Motor neuron (in vitro differentiated cells): ENCODE measurements at regions of chr1 and their contacts with region 1.

Region 1: DNA sequence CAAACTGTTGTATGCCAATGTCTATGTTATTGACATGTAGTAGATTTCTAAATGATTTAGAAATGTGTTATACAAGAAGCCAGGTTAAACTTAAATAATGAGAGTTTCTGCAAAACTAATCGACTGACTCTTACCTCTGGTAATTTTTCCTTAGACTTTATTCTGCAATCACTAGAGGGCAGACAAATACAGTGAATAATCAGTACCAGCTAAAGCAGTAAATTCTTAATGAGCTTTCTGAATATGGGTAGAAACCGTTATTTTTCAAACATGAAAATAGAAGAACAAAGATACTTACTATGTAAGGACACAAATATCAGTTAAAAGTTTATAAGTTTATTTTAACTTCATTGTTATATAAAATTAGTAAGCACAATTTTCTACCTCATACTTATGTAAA is 97.9 kb upstream of the RGS1 start:
- ATAC-seq: peak in 4 of 8 experiments; percentile 20 to 58 (median 40)
- H3K4me3 ChIP-seq: no peak overlapping the region
- H3K27ac ChIP-seq: no peak overlapping the region
- H3K4me1 ChIP-seq: no peaks in the 10 kb centered on the region

Region 2: DNA sequence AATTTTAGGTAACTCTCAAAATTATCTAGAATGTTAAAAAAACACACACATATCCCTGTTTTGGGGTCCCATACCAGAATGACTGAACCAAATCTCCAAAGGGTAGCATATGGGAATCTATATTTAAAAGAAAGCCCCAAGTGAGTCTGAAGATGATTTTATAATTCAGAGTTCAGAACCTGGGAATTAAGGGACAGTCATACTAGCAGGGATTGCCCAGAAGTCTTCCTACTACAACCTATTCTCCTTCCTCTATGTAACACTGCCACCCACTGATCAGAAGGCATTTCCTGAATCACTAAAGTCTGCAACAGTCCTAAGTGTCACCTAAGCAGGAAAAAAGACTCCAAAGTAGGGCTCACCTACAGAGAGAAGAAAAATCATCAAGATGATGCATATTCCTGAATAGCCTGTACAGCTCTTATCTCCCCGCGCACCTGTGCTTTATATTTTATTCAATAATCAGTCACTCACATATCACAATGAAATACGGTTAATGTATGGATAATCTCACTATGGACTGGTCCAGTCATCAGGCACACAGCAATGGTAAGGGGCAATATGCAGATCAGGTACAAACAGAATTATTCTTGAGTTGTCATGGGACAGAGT is 102.8 kb after region 1 on chr1:
- in situ Hi-C with region 1: loop called in 3 of 9 experiments (anchors 10 to 25 kb)
- ATAC-seq: peak in 4 of 8 experiments; percentile 79 to 94 (median 90)
- H3K4me3 ChIP-seq: no peak overlapping the region
- H3K27ac ChIP-seq: no peak overlapping the region
- H3K4me1 ChIP-seq: no peaks in the 10 kb centered on the region

Region 3: DNA sequence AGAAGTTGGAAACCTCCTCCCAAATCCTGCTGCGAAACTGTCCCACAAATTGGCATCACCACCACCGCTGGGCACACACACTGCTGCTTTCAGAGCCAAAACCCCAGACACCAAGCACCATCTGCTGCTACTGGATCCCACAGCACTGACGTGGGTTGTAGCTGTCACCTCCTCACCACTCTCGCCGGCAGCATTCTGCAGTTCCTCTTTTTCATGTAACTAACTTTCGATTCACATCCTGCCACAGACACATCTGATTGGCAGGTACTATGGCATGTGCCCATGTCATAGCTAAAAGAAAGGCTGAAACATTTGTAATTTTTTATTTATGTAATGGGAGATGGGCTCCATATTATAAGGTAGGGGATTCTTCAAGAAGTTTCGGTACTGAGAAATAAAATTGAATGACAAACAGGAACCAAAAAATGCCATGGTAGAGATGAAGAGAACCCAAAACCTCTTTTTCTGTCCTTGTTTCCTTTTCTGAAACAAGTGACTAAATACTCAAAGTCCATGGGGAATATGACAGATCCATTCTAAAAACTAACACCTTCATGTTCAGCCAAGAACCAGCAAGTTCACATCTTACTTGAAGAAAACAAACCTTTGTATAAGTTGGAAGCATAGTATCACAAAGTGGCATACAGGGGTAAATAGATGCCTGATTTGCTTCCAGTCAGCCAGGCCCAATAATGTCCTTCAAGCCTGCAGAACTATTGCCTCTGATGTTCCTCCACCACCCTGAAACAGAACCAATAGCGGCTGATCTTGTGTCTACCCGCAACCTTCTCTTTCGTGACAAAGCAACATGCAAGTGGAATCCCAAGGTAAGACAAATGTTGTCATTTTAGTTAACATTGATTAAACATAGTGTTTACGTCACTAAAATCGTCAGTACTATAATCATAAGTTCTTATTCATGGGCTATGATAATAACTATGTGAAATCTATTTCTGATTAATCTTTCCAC is 131.8 kb after region 1 on chr1:
- in situ Hi-C with region 1: loop called in 1 of 9 experiments (anchors 10 kb)
- ATAC-seq: no peak
- H3K4me3 ChIP-seq: no peak overlapping the region
- H3K27ac ChIP-seq: no peak overlapping the region
- H3K4me1 ChIP-seq: no peaks in the 10 kb centered on the region

Region 4: GRCh38 chr1:192787914-192788585 is 310.4 kb after region 1 on chr1:
- in situ Hi-C with region 1: loop called in 1 of 9 experiments (anchors 25 kb)
- ATAC-seq: peak; percentile 90 to 100 (median 98)
- H3K4me3 ChIP-seq: no peak overlapping the region
- H3K27ac ChIP-seq: no peak overlapping the region
- H3K4me1 ChIP-seq: no peaks in the 10 kb centered on the region

Region 5: GRCh38 chr1:193019442-193020026 is 541.9 kb after region 1 on chr1:
- in situ Hi-C with region 1: loop called in 4 of 9 experiments (anchors 10 to 25 kb)
- ATAC-seq: peak in 4 of 8 experiments; percentile 34 to 66 (median 58)
- H3K4me3 ChIP-seq: no peak overlapping the region
- H3K27ac ChIP-seq: no peak overlapping the region
- H3K4me1 ChIP-seq: no peaks in the 10 kb centered on the region

Region 6: DNA sequence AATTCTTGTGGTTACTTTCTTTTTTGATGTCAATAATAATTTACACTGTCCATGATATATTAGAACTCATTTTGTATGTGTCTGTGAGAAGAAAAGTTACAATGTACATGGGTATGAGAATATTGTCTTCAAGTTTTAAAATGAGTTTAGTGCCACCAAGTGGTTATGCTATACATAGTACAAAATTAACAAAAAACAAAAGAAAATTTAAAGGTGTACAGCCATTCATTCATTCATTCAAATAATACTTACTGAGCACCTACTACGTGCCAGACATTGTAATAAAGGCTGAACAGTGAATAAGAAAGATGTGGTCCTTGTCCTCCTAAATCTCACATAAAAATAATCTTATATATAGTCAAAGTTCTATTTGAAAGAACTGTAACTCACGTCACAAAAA is 553.8 kb after region 1 on chr1:
- in situ Hi-C with region 1: loop called in 1 of 9 experiments (anchors 25 kb)
- ATAC-seq: peak in 3 of 8 experiments; percentile 31 to 50 (median 43)
- H3K4me3 ChIP-seq: no peak overlapping the region
- H3K27ac ChIP-seq: no peak overlapping the region
- H3K4me1 ChIP-seq: no peaks in the 10 kb centered on the region